ENCODE measurements at regions of chr20 and their contacts with region 1.

Region 1: DNA sequence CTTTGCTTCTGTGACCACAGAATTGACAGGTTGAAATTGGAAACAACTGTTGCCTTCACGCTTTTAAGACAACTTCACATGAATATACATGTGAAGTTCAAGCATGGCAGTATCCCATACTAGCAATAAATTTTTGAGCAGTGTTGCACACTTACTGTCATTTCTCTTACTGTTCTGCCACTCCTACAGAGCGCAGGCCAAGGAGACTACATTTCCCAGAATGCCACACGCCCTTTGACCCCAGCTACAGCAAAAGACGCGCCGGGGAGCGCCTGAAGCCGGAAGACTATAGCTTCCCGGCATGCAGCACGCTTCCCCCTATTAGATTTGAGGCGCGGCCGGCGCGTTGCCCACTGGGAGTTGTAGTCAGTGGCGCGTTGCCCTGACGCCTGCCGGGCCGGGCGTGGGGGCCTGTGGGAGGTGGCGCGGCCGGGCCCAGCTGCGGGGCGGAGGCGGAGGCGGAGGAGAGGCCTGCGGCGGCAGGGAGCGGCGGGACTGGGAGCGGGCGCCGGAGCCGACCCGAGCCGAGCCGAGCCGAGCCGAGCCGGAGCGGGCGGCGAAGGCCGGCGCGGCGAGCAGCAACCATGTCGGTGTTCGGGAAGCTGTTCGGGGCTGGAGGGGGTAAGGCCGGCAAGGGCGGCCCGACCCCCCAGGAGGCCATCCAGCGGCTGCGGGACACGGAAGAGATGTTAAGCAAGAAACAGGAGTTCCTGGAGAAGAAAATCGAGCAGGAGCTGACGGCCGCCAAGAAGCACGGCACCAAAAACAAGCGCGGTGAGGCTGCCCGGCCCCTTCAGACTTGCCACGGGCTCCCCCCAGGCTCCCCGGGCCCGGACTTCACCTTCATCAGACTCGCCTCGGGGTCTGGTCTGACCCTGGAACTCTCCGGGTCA is at the start of gene CHMP4B:
- DNase-seq: peak; percentile 99
- ATAC-seq: peak; percentile 90 to 92
- H3K4me3 ChIP-seq: peak within 1 kb of the TSS; percentile 85 to 98 (median 96)
- H3K27ac ChIP-seq: peak within 1 kb of the TSS; percentile 86 to 100 (median 98)
- H3K4me1 ChIP-seq: peaks cover 33 to 34% of the 10 kb centered on the region in 2 donors
- H3K27me3 ChIP-seq: no peaks in the 10 kb centered on the region
- CTCF ChIP-seq: peak in 1 of 5 experiments; percentile 18
- POLR2A ChIP-seq: peak; percentile 98
- total RNA-seq, gene CHMP4B: 57.4 to 109 (median 82.7) TPM

Region 2: GRCh38 chr20:32357869-32358631 is 1453.1 kb before region 1 on chr20 and contains the start of gene ASXL1:
- in situ Hi-C with region 1: no loop called
- intact Hi-C with region 1: loop called (anchors 5 kb)
- DNase-seq: peak; percentile 96 to 97
- ATAC-seq: peak; percentile 90 to 91
- H3K4me3 ChIP-seq: peak within 1 kb of the TSS; percentile 75 to 98 (median 90)
- H3K27ac ChIP-seq: peak within 1 kb of the TSS; percentile 97 to 99 (median 98)
- H3K4me1 ChIP-seq: peaks cover 31 to 37% of the 10 kb centered on the region in 2 donors
- H3K27me3 ChIP-seq: no peaks in the 10 kb centered on the region
- CTCF ChIP-seq: no peak
- POLR2A ChIP-seq: peak; percentile 28 to 39
- total RNA-seq, gene ASXL1: 21.8 to 36.6 (median 28.4) TPM

Region 3: DNA sequence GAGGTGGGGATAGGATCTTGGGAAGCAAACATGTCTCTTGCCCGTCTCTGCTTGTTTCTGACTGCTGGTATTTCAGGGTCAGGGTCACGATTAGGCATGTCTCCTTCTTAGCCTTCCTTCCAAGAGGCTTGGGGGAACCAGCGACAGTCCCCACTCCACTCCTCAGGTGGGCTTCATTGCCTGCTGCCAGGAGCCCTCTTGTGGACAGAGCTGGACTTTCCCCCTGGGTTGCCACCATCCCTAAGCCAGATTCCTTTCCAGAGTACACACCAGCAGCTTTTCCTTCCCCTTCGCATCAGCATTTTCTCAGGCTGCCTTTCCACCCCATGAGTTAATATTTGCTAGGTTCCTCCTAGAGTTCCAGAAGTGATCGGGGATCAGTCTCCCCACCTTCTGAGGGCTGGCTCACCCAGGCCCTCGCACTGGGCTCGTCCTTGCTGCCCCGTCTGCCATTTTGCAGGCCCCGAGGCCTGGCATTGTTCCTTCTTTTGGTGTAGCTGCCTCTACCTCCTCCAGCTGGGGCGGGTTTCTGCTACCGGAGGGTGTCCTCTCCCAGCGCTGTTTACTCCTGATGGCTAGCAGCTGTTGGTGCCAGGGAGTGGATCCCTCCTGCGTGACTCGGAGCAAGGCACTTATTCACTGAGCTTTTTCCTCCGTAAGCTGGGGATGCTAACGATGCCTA is 157.8 kb before region 1 on chr20:
- in situ Hi-C with region 1: no loop called
- intact Hi-C with region 1: no loop called
- DNase-seq: no peak
- ATAC-seq: peak; percentile 33 to 48
- H3K4me3 ChIP-seq: no peak overlapping the region
- H3K27ac ChIP-seq: no peak overlapping the region
- H3K4me1 ChIP-seq: peaks cover 21% of the 10 kb centered on the region in 2 donors
- H3K27me3 ChIP-seq: no peaks in the 10 kb centered on the region
- CTCF ChIP-seq: peak; percentile 57 to 73 (median 67)
- POLR2A ChIP-seq: no peak

Region 4: GRCh38 chr20:33674295-33675135 is 136.6 kb before region 1 on chr20 and contains the start of gene NECAB3:
- in situ Hi-C with region 1: no loop called
- intact Hi-C with region 1: loop called (anchors 5 kb)
- DNase-seq: peak; percentile 66 to 85
- ATAC-seq: peak; percentile 80 to 84
- H3K4me3 ChIP-seq: peak within 1 kb of the TSS; percentile 78 to 91 (median 83)
- H3K27ac ChIP-seq: peak within 1 kb of the TSS; percentile 89 to 96 (median 93)
- H3K4me1 ChIP-seq: peaks cover 18 to 23% of the 10 kb centered on the region in 2 donors
- H3K27me3 ChIP-seq: no peaks in the 10 kb centered on the region
- CTCF ChIP-seq: no peak
- POLR2A ChIP-seq: peak; percentile 82 to 87
- total RNA-seq, gene NECAB3: 72.3 to 127 (median 107) TPM

Region 5: DNA sequence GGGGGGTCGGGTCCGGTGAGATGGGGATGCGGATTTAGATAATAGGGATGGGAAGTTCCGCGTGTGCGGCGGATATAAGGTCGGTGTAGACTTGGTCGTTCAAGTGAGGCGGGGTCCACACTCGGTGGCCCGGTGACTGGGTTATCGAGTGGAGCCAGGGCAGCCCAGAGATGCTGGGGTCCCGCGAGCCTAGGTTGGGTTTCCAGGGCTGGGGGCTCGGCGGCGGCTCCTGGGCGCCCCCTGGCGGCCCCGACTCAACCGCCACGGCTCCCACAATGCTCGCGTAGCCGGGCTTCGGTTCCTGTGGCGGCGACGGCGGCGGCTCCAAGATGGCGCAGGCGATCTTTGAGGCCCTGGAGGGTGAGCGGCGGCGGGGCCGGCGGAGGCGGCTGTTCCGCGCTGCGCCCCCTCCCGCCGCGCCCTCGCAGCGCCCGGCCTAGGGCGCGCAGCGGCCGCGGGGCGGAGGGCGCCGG is 79.4 kb before region 1 on chr20 and contains the start of gene ZNF341:
- in situ Hi-C with region 1: no loop called
- intact Hi-C with region 1: loop called (anchors 2 kb)
- DNase-seq: peak; percentile 72 to 83
- ATAC-seq: peak in 1 of 2 donors; percentile 79
- H3K4me3 ChIP-seq: peak within 1 kb of the TSS; percentile 61 to 73 (median 70)
- H3K27ac ChIP-seq: peak within 1 kb of the TSS; percentile 77 to 97 (median 90)
- H3K4me1 ChIP-seq: peaks cover 14 to 15% of the 10 kb centered on the region in 2 donors
- H3K27me3 ChIP-seq: no peaks in the 10 kb centered on the region
- CTCF ChIP-seq: peak; percentile 89 to 94 (median 92)
- POLR2A ChIP-seq: no peak
- total RNA-seq, gene ZNF341: 1.8 to 4.6 (median 2.6) TPM

Region 6: GRCh38 chr20:33828967-33829560 is 17.9 kb after region 1 on chr20:
- in situ Hi-C with region 1: no loop called
- intact Hi-C with region 1: loop called (anchors 1 kb)
- DNase-seq: no peak
- ATAC-seq: peak; percentile 23 to 34
- H3K4me3 ChIP-seq: no peak overlapping the region
- H3K27ac ChIP-seq: peak overlapping the region; percentile 68 to 83 (median 71)
- H3K4me1 ChIP-seq: peaks cover 94 to 99% of the 10 kb centered on the region in 2 donors
- H3K27me3 ChIP-seq: no peaks in the 10 kb centered on the region
- CTCF ChIP-seq: no peak
- POLR2A ChIP-seq: no peak

Region 7: GRCh38 chr20:33862709-33863403 is 51.7 kb after region 1 on chr20:
- in situ Hi-C with region 1: no loop called
- intact Hi-C with region 1: no loop called
- DNase-seq: peak in 1 of 2 donors; percentile 15
- ATAC-seq: peak in 1 of 2 donors; percentile 36
- H3K4me3 ChIP-seq: no peak overlapping the region
- H3K27ac ChIP-seq: no peak overlapping the region
- H3K4me1 ChIP-seq: peaks cover 6 to 10% of the 10 kb centered on the region in 2 donors
- H3K27me3 ChIP-seq: no peaks in the 10 kb centered on the region
- CTCF ChIP-seq: peak; percentile 40 to 75 (median 55)
- POLR2A ChIP-seq: no peak

Region 8: DNA sequence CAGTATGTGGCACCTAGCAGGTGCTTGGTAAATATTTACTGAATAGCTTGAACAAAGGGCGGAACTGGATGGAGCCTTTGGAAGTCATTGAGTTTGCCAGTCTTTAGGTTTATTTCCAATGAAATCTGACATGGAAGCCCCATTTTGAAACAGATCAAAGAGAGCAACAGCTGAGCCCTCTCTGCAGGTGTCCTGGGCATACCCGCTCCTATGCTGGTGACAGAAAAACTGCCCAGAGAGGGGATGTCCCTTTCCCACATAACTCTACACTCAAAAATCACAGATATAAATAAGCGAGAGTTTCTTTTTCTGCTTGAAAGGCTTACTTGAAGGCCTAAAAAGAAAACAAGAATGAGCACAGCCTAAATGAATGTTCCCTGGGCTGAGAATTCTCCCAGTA is 129.5 kb after region 1 on chr20:
- in situ Hi-C with region 1: no loop called
- intact Hi-C with region 1: no loop called
- DNase-seq: no peak
- ATAC-seq: no peak
- H3K4me3 ChIP-seq: no peak overlapping the region
- H3K27ac ChIP-seq: no peak overlapping the region
- H3K4me1 ChIP-seq: no peaks in the 10 kb centered on the region
- H3K27me3 ChIP-seq: no peaks in the 10 kb centered on the region
- CTCF ChIP-seq: no peak
- POLR2A ChIP-seq: no peak

Region 9: GRCh38 chr20:34111702-34112599 is 300.8 kb after region 1 on chr20 and contains the start of gene EIF2S2:
- in situ Hi-C with region 1: no loop called
- intact Hi-C with region 1: loop called (anchors 5 kb)
- DNase-seq: peak; percentile 91 to 97
- ATAC-seq: peak; percentile 92 to 95
- H3K4me3 ChIP-seq: peak within 1 kb of the TSS; percentile 82 to 95 (median 83)
- H3K27ac ChIP-seq: peak within 1 kb of the TSS; percentile 90 to 98 (median 97)
- H3K4me1 ChIP-seq: peaks cover 27 to 41% of the 10 kb centered on the region in 2 donors
- H3K27me3 ChIP-seq: no peaks in the 10 kb centered on the region
- CTCF ChIP-seq: no peak
- POLR2A ChIP-seq: peak; percentile 95 to 98
- total RNA-seq, gene EIF2S2: 79.0 to 85.2 (median 83.9) TPM